ENCODE measurements at regions of chr10 and their contacts with region 1.

Region 1: DNA sequence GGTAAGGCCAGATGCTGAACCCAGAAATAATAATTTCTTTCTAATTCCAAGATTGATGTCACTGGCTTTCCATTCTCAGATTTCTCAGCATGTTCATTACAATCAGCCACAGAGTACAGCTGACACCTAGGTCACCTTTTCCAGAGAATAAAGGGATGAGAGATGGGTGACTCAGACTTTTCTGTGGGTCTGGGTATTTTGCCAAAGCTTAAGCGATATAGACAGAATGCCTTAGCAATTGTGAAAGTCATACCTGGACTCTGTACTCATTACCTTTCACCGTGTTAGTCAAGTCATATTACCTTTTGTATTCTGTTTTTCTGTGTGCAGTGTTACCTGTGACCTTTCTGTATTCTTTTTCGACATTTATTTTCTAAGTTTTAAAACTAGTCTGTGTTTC is 10.6 kb upstream of the PRTFDC1 start:
- DNase-seq: peak; percentile 94
- ATAC-seq: peak; percentile 83
- H3K4me3 ChIP-seq: no peak overlapping the region
- H3K27ac ChIP-seq: peak overlapping the region; percentile 83
- H3K4me1 ChIP-seq: peaks cover 45% of the 10 kb centered on the region
- H3K27me3 ChIP-seq: no peaks in the 10 kb centered on the region
- CTCF ChIP-seq: no peak

Region 2: DNA sequence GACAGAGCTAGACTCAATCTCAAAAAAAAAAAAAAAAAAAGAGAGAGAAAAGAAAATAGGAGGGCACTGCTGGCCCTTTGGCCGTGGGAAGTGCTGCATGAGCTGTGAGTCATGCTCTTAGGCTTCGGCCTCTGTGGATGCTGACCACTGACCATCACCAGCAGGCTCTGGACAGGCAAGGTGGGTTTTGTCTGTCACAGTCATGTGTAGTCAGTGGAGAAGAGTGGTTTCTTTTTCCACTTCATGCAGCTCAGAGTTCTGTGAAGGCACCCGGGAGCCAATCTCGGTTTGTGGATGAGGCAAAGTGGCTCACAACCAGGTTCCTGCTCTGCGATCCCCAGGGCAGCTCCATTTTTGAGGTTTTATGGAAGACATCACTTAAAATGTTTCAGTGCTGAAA is 68.7 kb before region 1 on chr10:
- CTCF ChIA-PET with region 1: no interaction called
- POLR2A ChIA-PET with region 1: no interaction called
- intact Hi-C with region 1: loop called (anchors 5 kb)
- DNase-seq: no peak
- ATAC-seq: no peak
- H3K4me3 ChIP-seq: no peak overlapping the region
- H3K27ac ChIP-seq: no peak overlapping the region
- H3K4me1 ChIP-seq: peaks cover 45% of the 10 kb centered on the region
- H3K27me3 ChIP-seq: no peaks in the 10 kb centered on the region
- CTCF ChIP-seq: no peak

Region 3: GRCh38 chr10:25531457-25532061 is 568.6 kb after region 1 on chr10:
- CTCF ChIA-PET with region 1: no interaction called
- POLR2A ChIA-PET with region 1: no interaction called
- intact Hi-C with region 1: no loop called
- DNase-seq: no peak
- ATAC-seq: no peak
- H3K4me3 ChIP-seq: no peak overlapping the region
- H3K27ac ChIP-seq: no peak overlapping the region
- H3K4me1 ChIP-seq: no peaks in the 10 kb centered on the region
- H3K27me3 ChIP-seq: no peaks in the 10 kb centered on the region
- CTCF ChIP-seq: no peak

Measured in PC-3 (cell line).